ENCODE measurements at regions of chr2 and their contacts with region 1.

Region 1: DNA sequence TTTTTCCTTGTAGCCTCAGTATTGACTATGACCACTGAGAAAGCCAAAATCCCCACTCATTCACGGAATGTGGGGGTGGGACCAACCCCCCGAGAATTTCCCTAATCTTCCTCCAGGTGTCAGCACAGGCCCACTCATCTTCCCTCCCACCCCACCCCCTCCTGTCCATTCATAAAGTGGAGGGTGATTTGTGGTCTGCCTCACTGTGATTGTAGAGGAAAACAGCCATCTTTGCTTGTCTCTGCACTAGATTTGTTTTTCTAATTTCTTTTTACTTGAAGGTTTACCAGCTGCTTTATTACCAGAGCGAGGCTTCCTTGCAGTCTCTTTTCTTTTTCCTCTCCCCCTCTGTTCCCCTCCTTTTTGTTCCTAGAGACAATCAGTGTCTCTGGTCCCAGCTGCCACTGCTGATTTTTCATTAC is 171.8 kb downstream of the ICOS start:
- DNase-seq: peak; percentile 18
- H3K4me3 Mint-ChIP-seq: peak overlapping the region; percentile 60
- H3K27ac Mint-ChIP-seq: peak overlapping the region; percentile 90
- H3K4me1 Mint-ChIP-seq: peaks cover 81% of the 10 kb centered on the region
- H3K27me3 Mint-ChIP-seq: no peaks in the 10 kb centered on the region

Region 2: GRCh38 chr2:203740780-203741281 is 367.5 kb before region 1 on chr2:
- intact Hi-C with region 1: loop called (anchors 1 kb)
- DNase-seq: peak; percentile 66
- H3K4me3 Mint-ChIP-seq: peak overlapping the region; percentile 67
- H3K27ac Mint-ChIP-seq: peak overlapping the region; percentile 97
- H3K4me1 Mint-ChIP-seq: peaks cover 78% of the 10 kb centered on the region
- H3K27me3 Mint-ChIP-seq: no peaks in the 10 kb centered on the region

Region 3: DNA sequence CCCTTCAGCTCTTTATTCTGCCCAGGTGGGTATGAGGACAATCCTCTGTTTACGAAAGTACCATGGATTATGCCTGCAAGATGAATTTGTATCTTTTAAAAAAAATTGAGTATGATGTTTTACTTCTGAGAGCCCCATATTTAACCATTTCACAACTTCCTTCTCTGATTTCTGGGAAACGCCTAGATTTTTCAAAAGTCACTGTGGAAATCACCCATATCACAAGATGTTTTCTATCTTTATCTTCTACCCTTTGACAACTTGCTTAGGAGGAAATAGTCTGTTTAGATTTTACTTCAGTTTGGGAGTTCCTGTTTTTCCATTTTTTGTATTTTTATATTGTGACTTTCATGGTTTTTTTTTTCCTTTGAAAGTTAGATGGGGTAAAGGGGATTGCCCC is 118.8 kb before region 1 on chr2:
- intact Hi-C with region 1: loop called (anchors 1 kb)
- DNase-seq: no peak
- H3K4me3 Mint-ChIP-seq: peak overlapping the region; percentile 3
- H3K27ac Mint-ChIP-seq: peak overlapping the region; percentile 78
- H3K4me1 Mint-ChIP-seq: peaks cover 37% of the 10 kb centered on the region
- H3K27me3 Mint-ChIP-seq: no peaks in the 10 kb centered on the region

Region 4: GRCh38 chr2:204072443-204073324 is 35.7 kb before region 1 on chr2:
- intact Hi-C with region 1: loop called (anchors 2 kb)
- DNase-seq: peak; percentile 44
- H3K4me3 Mint-ChIP-seq: no peak overlapping the region
- H3K27ac Mint-ChIP-seq: no peak overlapping the region
- H3K4me1 Mint-ChIP-seq: peaks cover 13% of the 10 kb centered on the region
- H3K27me3 Mint-ChIP-seq: no peaks in the 10 kb centered on the region

Region 5: GRCh38 chr2:204239411-204240165 is 131.2 kb after region 1 on chr2:
- intact Hi-C with region 1: loop called (anchors 2 kb)
- DNase-seq: no peak
- H3K4me3 Mint-ChIP-seq: no peak overlapping the region
- H3K27ac Mint-ChIP-seq: no peak overlapping the region
- H3K4me1 Mint-ChIP-seq: peaks cover 18% of the 10 kb centered on the region
- H3K27me3 Mint-ChIP-seq: peaks cover 10% of the 10 kb centered on the region

Region 6: GRCh38 chr2:205077159-205077558 is 968.8 kb after region 1 on chr2:
- intact Hi-C with region 1: loop called (anchors 1 kb)
- DNase-seq: peak; percentile 2
- H3K4me3 Mint-ChIP-seq: peak overlapping the region; percentile 28
- H3K27ac Mint-ChIP-seq: peak overlapping the region; percentile 11
- H3K4me1 Mint-ChIP-seq: peaks cover 35% of the 10 kb centered on the region
- H3K27me3 Mint-ChIP-seq: no peaks in the 10 kb centered on the region

Region 7: GRCh38 chr2:206085742-206086445 is 1977.6 kb after region 1 on chr2 and contains the start of gene INO80D:
- intact Hi-C with region 1: loop called (anchors 2 kb)
- DNase-seq: peak; percentile 72
- H3K4me3 Mint-ChIP-seq: peak within 1 kb of the TSS; percentile 99
- H3K27ac Mint-ChIP-seq: peak within 1 kb of the TSS; percentile 99
- H3K4me1 Mint-ChIP-seq: peaks cover 30% of the 10 kb centered on the region
- H3K27me3 Mint-ChIP-seq: peaks cover 2% of the 10 kb centered on the region
- total RNA-seq, gene INO80D: 29.4 and 30.3 TPM in 2 replicates

Measured in activated T-helper 1 cell treated with anti-CD3 and anti-CD28 coated beads, Interleukin-12 subunit alpha, Interleukin-12 subunit beta, Interleukin-2, Interleukin-4 antibody, amounts not matched to agents 30 ng/mL and 10 ng/mL and 1 ng/mL, durations not matched to agents 14 hours and 24 hours and 36 hours (primary cell).